Activated CD8-positive, alpha-beta T cell treated with anti-CD3 and anti-CD28 coated beads, Interleukin-2, amount 10 ng/mL, durations not matched to agents 7 days and 5 days (primary cell): ENCODE measurements at regions of chr1 and their contacts with region 1.

Region 1: GRCh38 chr1:226121587-226122400 is 59.3 kb downstream of the H3-3A start:
- DNase-seq: peak; percentile 78
- ATAC-seq: peak; percentile 78
- H3K4me3 Mint-ChIP-seq: peak overlapping the region; percentile 78
- H3K27ac Mint-ChIP-seq: peak overlapping the region; percentile 84
- H3K4me1 Mint-ChIP-seq: peaks cover 41% of the 10 kb centered on the region
- H3K27me3 Mint-ChIP-seq: peaks cover 11% of the 10 kb centered on the region

Region 2: DNA sequence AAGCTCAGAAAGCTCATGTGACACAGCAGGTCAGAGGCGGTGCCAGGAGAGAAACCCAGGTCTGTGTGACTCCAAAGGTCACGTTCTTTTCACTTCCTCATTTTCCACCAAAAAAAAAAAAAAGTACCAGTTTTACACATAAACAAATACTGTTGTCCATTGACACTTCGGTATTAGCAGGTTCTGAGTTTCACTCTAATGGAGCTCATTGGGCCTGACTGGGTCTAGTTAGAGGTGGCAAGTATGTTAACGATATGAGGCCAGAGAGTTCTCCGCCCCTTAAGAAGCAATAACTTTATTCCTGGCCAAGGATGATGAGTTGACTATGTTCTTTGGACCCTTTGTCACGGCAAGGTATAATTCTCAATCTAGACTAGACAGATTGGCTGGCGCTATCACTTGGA is 92.7 kb before region 1 on chr1:
- CTCF ChIA-PET with region 1: no interaction called
- POLR2A ChIA-PET with region 1: no interaction called
- DNase-seq: no peak
- ATAC-seq: no peak
- H3K4me3 Mint-ChIP-seq: no peak overlapping the region
- H3K27ac Mint-ChIP-seq: no peak overlapping the region
- H3K4me1 Mint-ChIP-seq: peaks cover 2% of the 10 kb centered on the region
- H3K27me3 Mint-ChIP-seq: no peaks in the 10 kb centered on the region

Region 3: DNA sequence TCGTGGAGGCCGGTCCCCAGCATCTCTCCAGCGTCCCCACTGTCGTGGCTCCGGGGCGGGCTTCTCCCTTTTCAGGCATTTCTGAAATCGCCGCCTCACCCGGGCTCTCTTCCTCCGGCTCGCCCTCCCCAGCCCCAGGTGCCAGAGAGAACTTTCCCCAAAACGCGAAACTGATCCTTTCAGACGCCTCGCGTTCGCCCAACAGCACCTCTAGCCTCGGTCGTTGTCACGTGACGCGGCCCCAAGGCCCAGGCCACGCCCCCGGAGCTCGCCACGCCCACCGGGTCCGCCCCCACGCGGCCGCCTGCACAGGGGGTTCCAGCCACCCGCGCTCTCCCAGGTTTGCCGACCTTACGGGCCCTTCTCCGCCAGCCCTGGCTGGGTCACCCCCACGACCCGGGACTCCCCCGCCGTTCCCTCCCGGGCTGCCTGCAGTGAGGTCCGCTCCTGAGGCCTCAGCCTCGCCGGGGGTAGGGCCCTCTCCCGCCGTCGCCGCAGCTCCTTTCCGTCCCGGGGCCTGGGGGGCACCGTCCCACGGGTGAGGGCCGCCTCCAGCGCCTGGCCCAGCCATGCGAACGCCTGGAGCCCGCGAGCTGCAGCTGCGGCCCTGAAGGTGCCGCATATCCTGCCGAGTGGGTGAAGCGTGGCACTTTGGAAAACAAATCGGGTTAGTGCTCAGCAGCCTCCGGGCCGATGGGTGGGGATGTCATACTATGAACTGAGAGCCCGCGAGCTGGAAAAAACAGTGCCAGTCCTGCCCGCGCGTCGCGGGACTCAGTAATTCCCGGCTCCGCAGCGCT is 38.3 kb before region 1 on chr1:
- CTCF ChIA-PET with region 1: interaction called, 11 read pairs
- POLR2A ChIA-PET with region 1: no interaction called
- DNase-seq: peak; percentile 93
- ATAC-seq: peak; percentile 96
- H3K4me3 Mint-ChIP-seq: peak overlapping the region; percentile 84
- H3K27ac Mint-ChIP-seq: peak overlapping the region; percentile 79
- H3K4me1 Mint-ChIP-seq: peaks cover 9% of the 10 kb centered on the region
- H3K27me3 Mint-ChIP-seq: peaks cover 7% of the 10 kb centered on the region

Region 4: DNA sequence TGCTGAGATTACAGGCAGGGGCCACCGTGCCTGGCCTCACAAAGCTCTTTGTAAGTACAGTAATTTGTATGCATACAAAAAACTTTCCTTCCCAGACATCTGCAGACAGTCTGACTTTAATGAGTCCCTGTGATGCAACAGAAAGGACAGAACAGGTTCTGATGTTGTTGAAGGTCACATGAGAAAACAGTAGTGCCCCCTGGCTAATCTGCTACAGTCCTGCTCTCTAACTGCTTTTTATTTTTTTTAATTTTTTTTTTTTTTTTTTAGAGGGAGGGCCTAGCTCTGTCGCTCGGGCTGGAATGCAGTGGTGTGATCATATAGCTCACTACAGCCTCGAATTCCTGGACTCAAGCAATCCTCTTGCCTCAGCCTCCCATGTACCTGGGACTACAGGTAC is 28.0 kb after region 1 on chr1:
- CTCF ChIA-PET with region 1: interaction called, 29 read pairs
- POLR2A ChIA-PET with region 1: no interaction called
- DNase-seq: no peak
- ATAC-seq: no peak
- H3K4me3 Mint-ChIP-seq: no peak overlapping the region
- H3K27ac Mint-ChIP-seq: no peak overlapping the region
- H3K4me1 Mint-ChIP-seq: peaks cover 5% of the 10 kb centered on the region
- H3K27me3 Mint-ChIP-seq: no peaks in the 10 kb centered on the region

Region 5: DNA sequence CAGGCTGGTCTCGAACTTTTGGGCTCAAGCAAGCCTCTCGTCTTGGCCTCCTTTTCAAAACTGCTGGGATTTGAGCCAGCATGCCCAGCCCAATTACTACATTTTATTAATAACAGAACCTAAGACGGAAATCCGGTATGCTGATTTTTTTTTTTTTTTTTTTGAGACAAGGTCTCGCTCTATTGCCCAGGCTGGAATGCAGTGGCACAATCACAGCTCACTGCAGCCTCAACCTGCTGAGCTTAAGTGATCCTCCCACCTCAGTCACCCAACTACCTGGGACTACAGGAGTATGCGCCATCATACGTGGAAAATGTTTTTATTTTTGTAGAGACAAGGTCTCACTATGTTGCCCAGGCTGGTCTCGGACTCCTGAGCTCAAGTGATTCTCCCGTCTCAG is 44.5 kb after region 1 on chr1:
- CTCF ChIA-PET with region 1: interaction called, 12 read pairs
- POLR2A ChIA-PET with region 1: no interaction called
- DNase-seq: no peak
- ATAC-seq: no peak
- H3K4me3 Mint-ChIP-seq: no peak overlapping the region
- H3K27ac Mint-ChIP-seq: no peak overlapping the region
- H3K4me1 Mint-ChIP-seq: no peaks in the 10 kb centered on the region
- H3K27me3 Mint-ChIP-seq: no peaks in the 10 kb centered on the region

Region 6: DNA sequence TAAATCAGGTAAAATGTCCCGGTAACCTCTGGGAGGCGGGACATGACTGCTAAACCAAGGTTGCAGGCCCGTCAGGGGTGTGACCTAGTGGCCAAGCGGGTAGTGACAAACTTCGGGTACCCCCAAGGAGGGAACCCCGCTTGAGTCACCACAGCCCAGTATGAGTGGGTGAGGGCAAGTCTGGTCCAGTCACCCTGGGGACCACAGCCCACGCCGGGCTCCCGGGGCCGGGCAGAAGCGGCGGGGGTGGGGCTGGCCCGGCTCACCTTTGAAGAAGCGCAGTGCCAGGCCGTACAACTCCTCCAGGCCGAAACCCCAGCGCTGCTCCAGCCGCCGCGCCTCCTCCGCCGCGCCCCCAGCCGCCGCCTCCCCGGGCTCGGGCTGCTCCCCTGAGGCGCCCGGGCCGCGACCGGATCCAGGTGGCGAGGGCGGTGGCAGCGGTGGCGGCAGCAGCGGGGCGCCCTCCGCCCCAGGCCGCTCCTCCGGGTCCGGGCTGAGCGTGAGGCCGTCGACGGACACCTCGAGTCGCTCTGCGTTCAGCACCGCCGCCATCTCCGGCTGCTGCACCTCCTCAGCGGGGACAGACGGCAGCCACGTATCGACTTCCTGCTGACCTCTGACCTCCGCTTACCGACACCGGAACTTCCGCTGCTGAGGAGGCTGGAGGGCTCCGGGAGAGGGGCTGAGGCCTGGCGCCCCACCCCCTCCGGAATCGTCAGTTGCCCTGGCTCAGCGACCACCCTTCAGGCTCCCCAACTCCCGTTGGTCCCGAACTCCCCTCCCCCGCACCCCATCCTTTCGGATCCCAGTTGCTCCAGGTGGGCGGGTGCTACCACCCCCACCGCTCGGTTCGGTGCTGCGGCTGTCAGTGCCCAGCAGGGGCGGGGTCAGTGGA is 64.6 kb after region 1 on chr1 and contains the start of gene ACBD3:
- CTCF ChIA-PET with region 1: interaction called, 27 read pairs
- POLR2A ChIA-PET with region 1: interaction called, 3 read pairs
- DNase-seq: peak; percentile 92
- ATAC-seq: peak; percentile 96
- H3K4me3 Mint-ChIP-seq: peak within 1 kb of the TSS; percentile 95
- H3K27ac Mint-ChIP-seq: peak within 1 kb of the TSS; percentile 93
- H3K4me1 Mint-ChIP-seq: peaks cover 28% of the 10 kb centered on the region
- H3K27me3 Mint-ChIP-seq: no peaks in the 10 kb centered on the region
- total RNA-seq, gene ACBD3: 19.9 to 20.0 TPM

Region 7: DNA sequence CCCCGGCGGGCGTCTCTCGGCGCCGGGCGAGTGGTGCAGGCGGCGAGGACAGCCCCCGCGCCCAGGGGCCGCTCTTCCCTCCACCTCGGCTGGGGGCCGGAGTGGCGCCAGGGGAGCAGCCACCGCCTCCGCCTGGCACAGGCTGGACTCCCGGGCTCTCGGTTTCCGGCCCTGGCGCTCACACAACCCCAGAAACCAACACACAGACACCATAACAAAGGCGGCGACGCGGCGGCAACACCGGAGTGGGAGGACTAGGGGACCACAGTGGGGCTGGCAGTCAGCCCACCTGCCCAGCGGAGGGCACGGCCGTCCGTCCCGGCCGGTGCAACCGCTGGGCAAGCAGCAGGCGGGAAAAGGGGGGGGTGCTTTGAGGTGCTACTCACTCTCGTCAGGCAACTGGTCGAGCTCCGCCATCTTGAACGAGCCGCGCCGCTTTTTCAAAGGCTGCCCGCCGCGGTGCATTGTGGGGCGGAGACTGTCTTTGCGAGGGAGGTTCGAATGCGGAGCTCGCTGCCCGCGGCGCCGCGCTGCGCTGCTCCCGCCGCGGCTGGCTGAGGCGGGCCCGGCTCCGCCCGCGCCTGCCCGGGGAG is 187.0 kb after region 1 on chr1 and contains the start of gene LIN9:
- CTCF ChIA-PET with region 1: interaction called, 23 read pairs
- POLR2A ChIA-PET with region 1: no interaction called
- DNase-seq: peak; percentile 95
- ATAC-seq: peak; percentile 91
- H3K4me3 Mint-ChIP-seq: peak within 1 kb of the TSS; percentile 90
- H3K27ac Mint-ChIP-seq: peak within 1 kb of the TSS; percentile 92
- H3K4me1 Mint-ChIP-seq: peaks cover 28% of the 10 kb centered on the region
- H3K27me3 Mint-ChIP-seq: peaks cover 14% of the 10 kb centered on the region
- total RNA-seq, gene LIN9: 13.3 to 14.9 TPM

Region 8: GRCh38 chr1:226407497-226408284 is 285.9 kb after region 1 on chr1 and contains the start of gene PARP1:
- CTCF ChIA-PET with region 1: interaction called, 26 read pairs
- POLR2A ChIA-PET with region 1: interaction called, 3 read pairs
- DNase-seq: peak; percentile 90
- ATAC-seq: peak; percentile 90
- H3K4me3 Mint-ChIP-seq: peak within 1 kb of the TSS; percentile 98
- H3K27ac Mint-ChIP-seq: peak within 1 kb of the TSS; percentile 97
- H3K4me1 Mint-ChIP-seq: peaks cover 41% of the 10 kb centered on the region
- H3K27me3 Mint-ChIP-seq: peaks cover 3% of the 10 kb centered on the region
- total RNA-seq, gene PARP1: 139 to 145 TPM